ENCODE measurements at regions of chr11 and their contacts with region 1.

Region 1: DNA sequence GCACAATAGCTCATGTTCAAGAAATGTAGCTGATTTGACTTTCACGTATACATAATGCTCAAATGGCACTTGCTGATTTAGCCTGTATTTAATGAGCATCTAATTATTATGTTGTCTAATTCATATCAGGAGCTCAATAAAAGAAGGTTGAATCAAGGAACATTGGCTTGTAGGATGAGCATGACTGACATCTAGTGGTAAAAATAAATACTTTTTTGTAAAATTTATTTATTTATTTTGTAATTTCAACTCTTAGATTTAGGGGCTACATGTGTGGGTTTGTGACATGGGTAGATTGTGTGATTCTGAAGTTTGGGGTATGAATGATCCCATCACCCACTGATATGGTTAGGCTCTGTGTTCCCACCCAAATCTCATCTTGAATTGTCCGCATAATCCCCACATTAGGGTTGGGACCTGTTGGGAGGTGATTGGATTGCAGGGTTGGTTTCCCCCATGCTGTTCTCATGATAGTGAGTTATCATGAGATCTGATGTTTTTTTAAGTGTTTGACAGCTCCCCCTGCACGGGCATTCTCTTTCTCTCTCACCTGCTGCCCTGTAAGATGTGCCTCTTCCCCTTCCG is 1.7 kb upstream of the OR52E5 start:
- DNase-seq: no peak
- H3K4me3 ChIP-seq: no peak overlapping the region
- H3K4me3 Mint-ChIP-seq: no peak overlapping the region
- H3K27ac Mint-ChIP-seq: no peak overlapping the region
- H3K4me1 ChIP-seq: no peaks in the 10 kb centered on the region
- H3K4me1 Mint-ChIP-seq: no peaks in the 10 kb centered on the region
- H3K27me3 ChIP-seq: no peaks in the 10 kb centered on the region
- H3K27me3 Mint-ChIP-seq: peaks cover 10% of the 10 kb centered on the region
- CTCF ChIP-seq: peak; percentile 48 to 58

Region 2: GRCh38 chr11:5476184-5476819 is 415.0 kb before region 1 on chr11:
- CTCF ChIA-PET with region 1: no interaction called
- POLR2A ChIA-PET with region 1: no interaction called
- intact Hi-C with region 1: loop called (anchors 10 kb)
- DNase-seq: peak in 1 of 2 experiments; percentile 43
- H3K4me3 ChIP-seq: no peak overlapping the region
- H3K4me3 Mint-ChIP-seq: no peak overlapping the region
- H3K27ac Mint-ChIP-seq: no peak overlapping the region
- H3K4me1 ChIP-seq: no peaks in the 10 kb centered on the region
- H3K4me1 Mint-ChIP-seq: no peaks in the 10 kb centered on the region
- H3K27me3 ChIP-seq: no peaks in the 10 kb centered on the region
- H3K27me3 Mint-ChIP-seq: no peaks in the 10 kb centered on the region
- CTCF ChIP-seq: peak; percentile 67 to 71

Region 3: GRCh38 chr11:5808500-5809121 is 82.7 kb before region 1 on chr11 and contains the start of gene OR52N2:
- CTCF ChIA-PET with region 1: no interaction called
- POLR2A ChIA-PET with region 1: no interaction called
- intact Hi-C with region 1: loop called (anchors 1 kb)
- DNase-seq: peak; percentile 71 to 80
- H3K4me3 ChIP-seq: peak within 1 kb of the TSS; percentile 26
- H3K4me3 Mint-ChIP-seq: peak within 1 kb of the TSS; percentile 61
- H3K27ac Mint-ChIP-seq: no peak within 1 kb of the TSS
- H3K4me1 ChIP-seq: no peaks in the 10 kb centered on the region; the same call in 1 of the 2 replicates
- H3K4me1 Mint-ChIP-seq: peaks cover 6% of the 10 kb centered on the region
- H3K27me3 ChIP-seq: no peaks in the 10 kb centered on the region
- H3K27me3 Mint-ChIP-seq: peaks cover 16% of the 10 kb centered on the region
- CTCF ChIP-seq: peak; percentile 86 to 94
- total RNA-seq, gene OR52N2: not detected in 2 replicates

Region 4: GRCh38 chr11:5865826-5866225 is 25.5 kb before region 1 on chr11:
- CTCF ChIA-PET with region 1: no interaction called
- POLR2A ChIA-PET with region 1: no interaction called
- intact Hi-C with region 1: loop called (anchors 2 kb)
- DNase-seq: no peak
- H3K4me3 ChIP-seq: no peak overlapping the region
- H3K4me3 Mint-ChIP-seq: no peak overlapping the region
- H3K27ac Mint-ChIP-seq: no peak overlapping the region
- H3K4me1 ChIP-seq: no peaks in the 10 kb centered on the region
- H3K4me1 Mint-ChIP-seq: no peaks in the 10 kb centered on the region
- H3K27me3 ChIP-seq: no peaks in the 10 kb centered on the region
- H3K27me3 Mint-ChIP-seq: no peaks in the 10 kb centered on the region
- CTCF ChIP-seq: no peak

Measured in Caco-2 (cell line).